ENCODE measurements at regions of chr4 and their contacts with region 1.

Region 1: DNA sequence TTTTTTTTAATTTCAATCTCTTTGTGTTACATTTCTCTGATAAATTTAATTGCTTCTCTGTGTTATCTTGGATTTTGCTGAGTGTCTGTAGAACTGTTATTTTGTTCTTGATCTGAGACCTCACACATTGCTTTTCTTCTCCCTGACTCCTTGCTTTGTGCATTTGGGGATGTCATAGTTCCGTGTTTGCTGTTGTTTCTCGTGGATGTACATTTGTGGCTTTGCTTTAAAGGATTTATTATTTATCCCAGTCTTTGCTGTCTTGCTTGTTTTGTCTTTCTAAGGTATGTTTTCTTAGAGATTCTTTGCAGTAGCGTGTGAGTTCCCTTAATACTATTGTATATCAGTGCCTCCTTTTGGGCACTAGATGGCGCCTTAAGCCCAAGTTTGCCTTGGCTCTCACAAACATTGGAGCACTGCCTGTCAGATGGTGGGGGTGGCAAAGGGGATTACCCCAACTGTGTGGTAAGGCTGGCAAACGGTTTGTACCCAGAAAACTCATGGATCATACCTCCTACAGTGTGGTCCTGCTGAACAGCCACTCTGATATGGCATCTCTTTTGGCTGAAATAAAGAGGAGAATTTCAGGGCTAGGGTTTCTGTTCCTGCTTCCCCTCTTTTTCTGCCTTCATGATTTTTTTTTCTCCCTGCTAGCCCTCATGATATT is 96.4 kb downstream of the PGRMC2 start:
- DNase-seq: peak in 1 of 2 donors; percentile 43
- H3K4me3 ChIP-seq: no peak overlapping the region
- CTCF ChIP-seq: no peak
- POLR2A ChIP-seq: no peak

Region 2: DNA sequence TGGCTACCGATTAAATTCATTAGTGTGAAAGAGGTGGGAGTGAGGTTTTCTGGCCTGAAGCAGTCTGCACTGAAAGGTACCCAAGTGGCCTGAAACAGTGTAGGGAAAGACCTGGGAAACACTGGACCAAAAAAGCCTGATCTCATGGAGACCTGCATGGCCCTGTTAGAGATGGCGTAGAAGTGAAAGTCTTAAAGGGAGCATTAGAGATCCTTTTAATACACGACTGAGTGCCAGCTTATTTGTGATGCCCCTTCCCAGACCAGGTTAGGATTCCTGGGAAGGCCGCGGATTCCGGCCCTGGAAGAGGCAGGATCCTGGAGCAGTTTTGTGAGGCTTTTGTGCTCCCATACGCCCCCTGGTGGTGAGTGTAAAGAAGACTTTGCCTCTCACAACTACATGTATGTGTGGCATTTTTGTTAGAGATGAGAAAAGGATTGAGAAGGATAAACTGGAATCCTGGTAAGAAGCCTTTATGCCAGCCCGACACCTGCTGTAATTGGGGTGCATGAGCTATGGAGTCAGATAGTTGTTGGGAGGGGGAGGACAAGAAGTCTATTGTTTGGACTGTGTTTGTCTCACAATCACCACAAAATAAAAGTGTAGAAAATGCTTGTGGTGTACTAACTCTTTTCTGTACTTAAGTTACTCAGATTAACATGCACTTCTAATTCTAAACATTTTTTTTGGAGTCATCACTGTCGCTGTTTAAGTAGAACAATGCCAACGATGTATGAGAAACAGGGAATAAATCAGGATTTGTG is 672.2 kb after region 1 on chr4:
- intact Hi-C with region 1: loop called (anchors 5 kb)
- DNase-seq: peak; percentile 63 to 94
- H3K4me3 ChIP-seq: no peak overlapping the region
- CTCF ChIP-seq: peak in 1 of 3 donors; percentile 71
- POLR2A ChIP-seq: no peak

Measured in lower leg skin (tissue), 4 donors.